Posterior vena cava (tissue), 2 donors: ENCODE measurements at regions of chr10 and their contacts with region 1.

Region 1: GRCh38 chr10:119263951-119264621 is 56.7 kb downstream of the GRK5 start:
- DNase-seq: no peak

Region 2: DNA sequence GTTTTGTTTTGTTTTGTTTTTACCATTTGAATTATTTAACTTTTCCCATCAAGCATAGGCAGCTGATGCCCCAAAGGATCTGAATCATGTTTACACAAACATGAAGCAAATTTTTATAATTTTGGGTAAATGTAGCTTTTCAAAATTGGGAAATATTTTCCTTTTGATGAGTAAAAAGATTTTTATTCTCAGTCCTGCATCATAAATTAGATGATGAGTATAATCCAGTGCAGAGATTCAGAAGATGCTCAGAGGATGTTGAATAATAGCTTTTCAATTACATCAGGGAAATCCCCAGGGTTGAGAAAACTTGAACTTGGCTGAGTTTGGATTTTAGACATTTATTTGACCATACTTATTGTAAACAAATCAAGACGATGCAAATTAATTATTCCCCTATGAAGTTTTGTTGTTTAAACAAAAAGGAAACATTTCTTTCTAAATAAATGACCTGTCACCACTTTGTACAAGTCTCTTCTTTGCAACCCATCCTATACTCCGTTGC is 1043.7 kb before region 1 on chr10:
- intact Hi-C with region 1: no loop called
- DNase-seq: no peak

Region 3: GRCh38 chr10:119207367-119207668 is 56.8 kb before region 1 on chr10 and contains the start of gene GRK5:
- intact Hi-C with region 1: no loop called
- DNase-seq: peak; percentile 98
- total RNA-seq, gene GRK5: 40.0 to 57.5 TPM

Region 4: DNA sequence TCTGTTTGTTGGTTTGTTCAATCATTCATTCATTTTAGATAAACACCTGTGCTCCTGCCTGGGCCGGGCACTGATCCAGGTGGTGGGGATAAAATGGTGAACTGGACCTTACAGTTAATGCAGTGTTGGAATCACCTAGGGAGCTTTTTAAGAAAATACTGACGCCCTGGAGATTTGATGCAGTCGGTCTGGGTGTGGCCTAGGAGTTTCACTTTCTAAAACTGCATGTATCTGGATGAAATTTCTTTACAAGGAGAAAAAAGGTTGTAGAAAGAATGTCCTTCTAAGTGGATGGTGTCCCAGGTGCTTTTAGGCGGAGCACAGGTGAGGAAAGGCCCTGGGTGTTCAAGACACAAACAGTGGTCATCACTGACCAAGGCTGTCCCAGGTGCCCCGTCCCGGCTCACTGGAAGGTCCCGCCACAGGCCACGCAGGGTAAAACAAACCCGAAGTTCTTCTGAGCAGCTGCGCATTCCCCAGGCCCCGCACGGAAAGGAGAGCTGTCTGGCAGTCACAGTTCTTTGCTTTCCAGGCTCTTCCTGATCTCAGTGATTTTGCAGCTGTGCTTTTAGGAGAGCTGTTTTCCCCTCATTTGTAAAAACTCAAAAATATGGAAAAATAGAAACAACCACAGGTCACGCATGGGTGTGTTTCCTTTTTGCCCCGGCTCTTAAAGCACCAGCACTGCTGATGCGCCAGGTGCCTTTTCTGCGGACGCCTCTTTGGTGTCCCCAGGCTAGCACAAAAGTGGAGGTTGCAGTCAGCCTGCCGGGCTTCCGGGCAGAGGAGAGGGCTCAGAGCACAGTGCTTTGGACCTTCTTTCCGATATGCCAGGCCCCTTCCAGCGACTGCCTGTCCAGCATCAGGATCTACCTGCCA is 105.1 kb after region 1 on chr10:
- intact Hi-C with region 1: loop called in 1 of 2 experiments (anchors 5 kb)
- DNase-seq: no peak

Region 5: DNA sequence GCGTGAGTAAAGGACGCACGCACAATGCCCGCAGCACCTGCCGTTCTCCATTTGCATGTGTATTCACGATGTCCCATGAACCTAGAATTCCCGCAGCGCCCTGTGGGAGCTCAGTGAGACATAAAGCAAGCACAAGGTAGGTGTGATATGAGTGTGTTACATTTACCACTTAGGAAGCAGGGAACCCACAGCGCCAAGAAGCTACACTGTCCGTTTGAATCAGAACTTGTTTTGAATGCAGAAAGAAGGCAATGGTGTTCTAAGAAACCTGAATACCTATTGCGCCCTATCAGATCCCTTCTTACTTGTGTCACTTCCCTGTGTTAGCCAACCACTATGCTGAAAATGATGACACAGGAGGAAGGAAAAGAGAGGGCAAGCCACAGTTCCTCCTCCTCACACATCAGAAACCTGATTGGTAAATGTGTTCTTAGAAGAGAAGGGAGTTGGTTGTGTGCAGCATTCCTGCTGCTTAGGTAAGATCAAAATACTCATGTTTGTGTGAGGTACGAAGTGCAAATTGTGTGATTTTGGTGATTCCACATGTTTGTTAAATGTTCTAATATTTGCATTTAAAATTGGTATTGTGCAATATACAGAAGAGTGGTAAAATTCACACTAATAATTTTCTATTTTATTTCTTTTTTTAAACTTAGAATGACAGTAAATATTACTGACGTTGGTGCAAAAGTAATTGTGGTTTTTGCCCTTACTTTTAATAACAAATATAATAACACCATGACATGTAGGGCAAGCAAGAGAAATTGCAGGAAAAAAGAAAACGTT is 813.8 kb after region 1 on chr10:
- intact Hi-C with region 1: no loop called
- DNase-seq: no peak